ENCODE measurements at regions of chr9 and their contacts with region 1.

Region 1: GRCh38 chr9:137302176-137302994 is at the start of gene NRARP:
- DNase-seq: no peak
- ATAC-seq: peak; percentile 72
- H3K4me3 ChIP-seq: peak within 1 kb of the TSS; percentile 70
- H3K27ac ChIP-seq: no peak within 1 kb of the TSS
- H3K4me1 ChIP-seq: peaks cover 35% of the 10 kb centered on the region
- H3K27me3 ChIP-seq: no peaks in the 10 kb centered on the region; a peak in 1 of 4 replicates
- CTCF ChIP-seq: peak; percentile 49 to 65 (median 53)
- EP300 ChIP-seq: no peak
- POLR2A ChIP-seq: peak; percentile 89
- RAD21 ChIP-seq: peak; percentile 34
- polyA plus RNA-seq, gene NRARP: not detected

Region 2: GRCh38 chr9:137316012-137316976 is 13.9 kb after region 1 on chr9:
- CTCF ChIA-PET with region 1: interaction called, 9 read pairs
- POLR2A ChIA-PET with region 1: interaction called, 19 read pairs
- RAD21 ChIA-PET with region 1: interaction called, 20 read pairs
- SMC1A ChIA-PET with region 1: interaction called, 8 read pairs
- in situ Hi-C with region 1: no loop called
- intact Hi-C with region 1: no loop called
- DNase-seq: no peak
- ATAC-seq: peak; percentile 80
- H3K4me3 ChIP-seq: peak overlapping the region; percentile 50; the same call in 1 of the 2 replicates
- H3K27ac ChIP-seq: peak overlapping the region; percentile 72
- H3K4me1 ChIP-seq: peaks cover 5% of the 10 kb centered on the region
- H3K27me3 ChIP-seq: no peaks in the 10 kb centered on the region
- CTCF ChIP-seq: no peak
- EP300 ChIP-seq: no peak
- POLR2A ChIP-seq: peak; percentile 66
- RAD21 ChIP-seq: no peak

Region 3: DNA sequence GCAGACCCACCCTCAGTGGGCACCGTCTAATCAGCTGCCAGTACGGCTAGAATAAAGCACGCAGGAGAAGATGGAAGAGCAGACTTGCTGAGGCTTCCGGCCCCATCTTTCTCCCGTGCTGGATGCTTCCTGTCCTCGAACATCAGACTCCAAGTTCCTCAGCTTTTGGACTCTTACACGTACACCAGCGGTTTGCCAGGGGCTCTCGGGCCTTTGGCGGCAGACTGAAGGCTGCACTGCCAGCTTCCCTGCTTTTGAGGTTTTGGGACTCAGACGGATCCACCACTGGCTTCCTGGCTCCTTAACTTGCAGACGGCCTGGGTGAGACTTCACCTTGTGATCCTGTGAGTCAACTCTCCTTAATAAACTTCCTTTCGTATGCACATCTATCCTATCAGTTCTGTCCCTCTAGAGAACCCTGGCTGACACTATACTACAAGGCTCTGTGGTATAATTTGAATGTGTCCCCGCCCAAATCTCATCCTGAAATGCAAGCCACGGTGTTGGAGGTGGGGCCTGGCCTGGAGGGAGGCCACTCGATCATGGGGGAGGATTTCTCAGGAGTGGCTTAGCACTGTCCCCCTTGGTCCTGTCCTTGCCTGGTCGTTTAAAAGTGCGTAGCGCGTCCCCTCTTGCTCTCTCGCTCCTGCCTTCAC is 30.8 kb after region 1 on chr9:
- CTCF ChIA-PET with region 1: no interaction called
- POLR2A ChIA-PET with region 1: no interaction called
- RAD21 ChIA-PET with region 1: no interaction called
- SMC1A ChIA-PET with region 1: no interaction called
- in situ Hi-C with region 1: no loop called
- intact Hi-C with region 1: no loop called
- DNase-seq: no peak
- ATAC-seq: no peak
- H3K4me3 ChIP-seq: no peak overlapping the region
- H3K27ac ChIP-seq: no peak overlapping the region
- H3K4me1 ChIP-seq: no peaks in the 10 kb centered on the region
- H3K27me3 ChIP-seq: no peaks in the 10 kb centered on the region
- CTCF ChIP-seq: no peak
- EP300 ChIP-seq: no peak
- POLR2A ChIP-seq: no peak
- RAD21 ChIP-seq: no peak

Region 4: GRCh38 chr9:137406876-137407589 is 104.6 kb after region 1 on chr9:
- CTCF ChIA-PET with region 1: interaction called, 17 read pairs
- POLR2A ChIA-PET with region 1: interaction called, 3 read pairs
- RAD21 ChIA-PET with region 1: interaction called, 4 read pairs
- SMC1A ChIA-PET with region 1: interaction called, 5 read pairs
- in situ Hi-C with region 1: no loop called
- intact Hi-C with region 1: loop called (anchors 2 kb)
- DNase-seq: no peak
- ATAC-seq: peak; percentile 86
- H3K4me3 ChIP-seq: peak overlapping the region; percentile 55; the same call in 1 of the 2 replicates
- H3K27ac ChIP-seq: peak overlapping the region; percentile 39; the same call in 1 of the 2 replicates
- H3K4me1 ChIP-seq: peaks cover 19% of the 10 kb centered on the region
- H3K27me3 ChIP-seq: no peaks in the 10 kb centered on the region
- CTCF ChIP-seq: peak; percentile 54 to 73 (median 71); a peak in 5 of 6 replicates
- EP300 ChIP-seq: no peak
- POLR2A ChIP-seq: no peak; the same call in 1 of the 2 replicates
- RAD21 ChIP-seq: peak; percentile 73

Region 5: DNA sequence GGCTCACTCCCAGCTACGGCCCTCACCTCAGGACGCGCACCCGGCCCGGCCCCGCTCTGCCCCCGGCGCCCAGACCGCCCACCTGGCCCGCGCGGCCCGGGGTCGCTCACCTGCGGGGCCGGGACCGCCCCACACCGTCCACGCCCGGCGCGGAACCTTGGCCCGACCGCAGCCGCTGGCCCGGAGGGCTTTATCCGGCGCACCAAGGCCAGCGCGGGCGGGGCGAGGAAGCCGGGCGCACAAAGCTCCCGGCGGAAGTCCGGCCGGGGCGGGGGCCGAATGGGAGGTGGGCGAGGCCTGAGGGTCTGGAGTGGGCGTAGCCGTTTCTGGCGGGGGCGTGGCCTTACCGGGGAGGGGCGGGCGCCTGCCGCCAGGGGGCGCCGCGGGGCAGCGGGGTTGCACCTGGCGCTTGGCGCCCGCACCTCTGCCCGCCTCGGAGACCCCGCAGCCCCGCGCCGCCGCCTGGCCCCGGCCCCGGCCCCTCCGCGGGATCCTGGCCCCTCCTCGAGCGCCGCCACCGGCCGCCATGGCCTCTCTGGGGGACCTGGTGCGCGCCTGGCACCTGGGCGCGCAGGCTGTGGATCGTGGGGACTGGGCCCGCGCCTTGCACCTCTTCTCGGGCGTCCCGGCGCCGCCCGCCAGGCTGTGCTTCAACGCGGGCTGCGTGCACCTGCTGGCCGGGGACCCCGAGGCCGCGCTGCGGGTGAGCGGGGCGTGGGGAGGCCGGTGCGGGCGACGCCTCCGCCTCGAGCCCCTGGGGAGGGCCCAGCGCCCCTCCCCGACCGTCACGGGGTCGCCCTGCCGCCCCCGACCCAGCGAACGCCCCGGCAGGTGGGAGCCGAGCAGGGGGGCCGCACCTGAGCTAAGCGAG is 120.9 kb after region 1 on chr9 and contains the starts of genes EXD3 and NOXA1:
- CTCF ChIA-PET with region 1: interaction called, 12 read pairs
- POLR2A ChIA-PET with region 1: interaction called, 4 read pairs
- RAD21 ChIA-PET with region 1: no interaction called
- SMC1A ChIA-PET with region 1: interaction called, 3 read pairs
- in situ Hi-C with region 1: no loop called
- intact Hi-C with region 1: loop called (anchors 5 kb)
- DNase-seq: peak; percentile 48
- ATAC-seq: peak; percentile 91
- H3K4me3 ChIP-seq: peak within 1 kb of the TSS; percentile 84
- H3K27ac ChIP-seq: peak within 1 kb of the TSS; percentile 41
- H3K4me1 ChIP-seq: no peaks in the 10 kb centered on the region; the same call in 1 of the 2 replicates
- H3K27me3 ChIP-seq: no peaks in the 10 kb centered on the region; a peak in 2 of 4 replicates
- CTCF ChIP-seq: peak; percentile 64 to 82 (median 73); a peak in 5 of 6 replicates
- EP300 ChIP-seq: no peak
- POLR2A ChIP-seq: peak; percentile 70
- RAD21 ChIP-seq: peak; percentile 45
- polyA plus RNA-seq, gene EXD3: 0.21 to 0.51 TPM
- polyA plus RNA-seq, gene NOXA1: not detected